ENCODE measurements at regions of chr18 and their contacts with region 1.

Region 1: GRCh38 chr18:45384137-45384961 is 230.9 kb upstream of the SLC14A2 start:
- H3K4me3 Mint-ChIP-seq: no peak overlapping the region
- H3K27ac Mint-ChIP-seq: no peak overlapping the region
- H3K4me1 Mint-ChIP-seq: peaks cover 4% of the 10 kb centered on the region
- H3K27me3 Mint-ChIP-seq: peaks cover 18% of the 10 kb centered on the region

Region 2: DNA sequence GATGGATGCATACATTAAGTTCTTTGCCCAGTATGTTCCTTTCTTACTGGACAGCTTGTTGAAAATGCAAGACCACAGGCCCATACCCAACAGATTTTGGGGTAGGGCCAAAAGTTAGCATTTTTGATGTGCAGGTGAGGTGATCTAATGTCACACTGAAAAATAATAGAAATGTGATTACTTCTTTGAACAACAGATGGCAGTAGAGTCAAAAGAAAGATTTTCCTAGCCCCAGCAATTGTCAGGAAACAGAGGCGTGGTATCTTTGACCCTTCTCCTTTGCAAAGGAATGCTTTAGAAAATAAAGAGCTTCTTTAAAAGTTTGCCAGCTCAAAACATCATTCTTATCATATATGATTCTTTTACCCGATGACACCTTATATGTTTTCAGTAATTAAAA is 1763.4 kb before region 1 on chr18:
- intact Hi-C with region 1: loop called (anchors 1 kb)
- H3K4me3 Mint-ChIP-seq: no peak overlapping the region
- H3K27ac Mint-ChIP-seq: no peak overlapping the region
- H3K4me1 Mint-ChIP-seq: no peaks in the 10 kb centered on the region
- H3K27me3 Mint-ChIP-seq: no peaks in the 10 kb centered on the region

Region 3: DNA sequence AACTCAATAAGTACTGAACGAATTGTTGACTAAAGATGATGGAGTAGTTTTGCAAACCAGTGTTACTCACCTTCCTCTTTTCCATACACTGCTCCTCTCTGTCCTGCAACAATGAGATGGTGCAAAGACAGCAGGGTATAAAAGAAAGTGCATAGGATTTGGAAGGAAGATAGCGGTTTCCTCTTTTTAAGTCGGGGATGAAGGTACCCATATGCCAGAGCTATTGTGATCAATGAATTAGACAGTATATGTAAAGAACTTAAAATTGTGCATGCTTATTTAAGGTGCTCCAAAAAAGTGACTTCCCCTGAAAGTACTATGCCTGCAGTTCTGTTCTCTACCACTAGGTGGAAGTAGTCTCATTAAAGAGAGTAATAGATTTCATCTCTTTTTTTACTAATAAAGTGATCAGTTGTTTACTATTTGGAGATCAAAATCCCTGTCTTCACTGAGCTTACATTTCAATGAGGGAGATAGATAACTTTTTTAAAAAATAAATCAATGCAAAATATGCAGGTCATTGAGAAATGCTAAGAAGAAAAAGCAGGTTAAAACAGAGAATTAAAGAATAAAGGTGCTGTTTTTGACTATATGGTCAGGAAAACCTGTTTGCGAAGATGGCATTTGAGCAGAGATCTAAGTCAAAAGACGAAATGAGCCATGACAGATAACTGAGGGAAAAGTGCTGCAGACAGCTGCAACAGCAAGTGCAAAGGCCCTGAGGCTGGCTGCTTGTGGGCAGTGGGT is 108.8 kb before region 1 on chr18:
- intact Hi-C with region 1: loop called (anchors 1 kb)
- H3K4me3 Mint-ChIP-seq: no peak overlapping the region
- H3K27ac Mint-ChIP-seq: no peak overlapping the region
- H3K4me1 Mint-ChIP-seq: no peaks in the 10 kb centered on the region
- H3K27me3 Mint-ChIP-seq: no peaks in the 10 kb centered on the region

Measured in dendritic cell treated with granulocyte-macrophage colony-stimulating factor and Interleukin-4, amounts not matched to agents 40 ng/mL and 50 ng/mL, for 4 days (primary cell).